ENCODE measurements at regions of chr18 and their contacts with region 1.

Region 1: DNA sequence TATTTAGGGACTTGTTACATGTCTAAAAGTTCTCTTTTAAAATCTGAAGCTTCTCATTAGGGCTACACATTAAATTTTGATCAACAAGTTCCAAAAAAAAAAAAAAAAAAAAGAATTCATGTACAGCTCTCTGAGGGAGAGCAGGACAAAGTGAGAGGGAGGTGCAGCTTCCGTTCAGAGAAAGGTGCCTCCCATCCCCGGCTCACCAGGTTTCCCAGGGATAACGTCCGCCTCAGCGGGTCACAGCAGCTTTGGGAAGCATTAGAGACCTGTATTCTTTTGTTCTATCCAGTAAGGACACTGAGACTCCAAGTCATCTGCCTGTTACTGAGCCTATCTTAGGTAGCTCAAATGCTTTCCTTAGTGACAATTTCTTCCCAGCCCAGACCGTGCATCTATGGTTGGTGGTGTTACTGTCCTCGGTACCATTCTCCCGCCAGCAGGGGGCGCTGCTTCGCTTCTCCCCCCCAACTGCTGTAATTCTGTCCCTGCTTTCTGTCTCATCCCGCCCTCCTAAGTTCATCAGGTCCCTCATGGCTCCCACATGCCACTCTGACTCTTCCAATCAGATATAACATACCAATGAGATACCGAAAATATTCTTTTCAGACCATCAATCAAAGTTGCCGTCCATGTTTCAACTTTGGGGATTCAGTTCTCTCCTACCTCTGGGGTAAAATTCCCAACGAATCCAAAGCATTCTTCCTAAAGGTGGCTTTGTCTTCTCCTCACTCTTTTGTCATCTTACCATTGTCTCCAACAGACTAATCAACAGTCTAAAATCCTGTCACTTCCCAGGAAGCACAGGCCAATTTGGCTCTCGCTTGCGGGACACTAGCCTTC is 466.5 kb downstream of the METTL4 start:
- DNase-seq: peak; percentile 28 to 42
- ATAC-seq: peak; percentile 76 to 90
- H3K4me3 ChIP-seq: no peak overlapping the region
- H3K27ac ChIP-seq: no peak overlapping the region
- H3K4me1 ChIP-seq: no peaks in the 10 kb centered on the region
- CTCF ChIP-seq: peak; percentile 54
- EP300 ChIP-seq: no peak
- POLR2A ChIP-seq: no peak
- RAD21 ChIP-seq: peak; percentile 58 to 67

Region 2: DNA sequence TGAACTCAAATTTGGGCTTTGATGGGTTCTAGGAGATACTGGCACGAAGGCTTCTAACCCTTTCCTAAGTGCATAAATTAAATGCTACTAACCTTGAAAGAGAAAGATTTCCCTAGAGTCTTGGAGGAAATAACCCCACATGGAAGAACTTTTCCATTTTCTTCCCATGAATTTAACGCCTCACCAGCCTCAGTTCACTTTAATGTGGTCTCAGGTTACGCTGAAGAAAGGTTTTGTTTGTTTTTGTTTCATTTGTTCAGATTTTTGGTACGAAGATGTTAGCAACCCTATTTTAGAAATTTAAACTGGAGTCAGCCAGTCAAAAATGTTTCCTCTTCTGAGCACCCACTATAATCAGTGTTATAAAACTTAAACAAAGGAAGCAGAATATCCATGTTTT is 435.7 kb after region 1 on chr18:
- CTCF ChIA-PET with region 1: interaction called, 18 read pairs
- POLR2A ChIA-PET with region 1: no interaction called
- DNase-seq: no peak
- ATAC-seq: no peak
- H3K4me3 ChIP-seq: no peak overlapping the region
- H3K27ac ChIP-seq: no peak overlapping the region
- H3K4me1 ChIP-seq: peaks cover 11% of the 10 kb centered on the region; the same call in 2 of the 3 replicates
- CTCF ChIP-seq: no peak
- EP300 ChIP-seq: no peak
- POLR2A ChIP-seq: no peak
- RAD21 ChIP-seq: no peak

Region 3: DNA sequence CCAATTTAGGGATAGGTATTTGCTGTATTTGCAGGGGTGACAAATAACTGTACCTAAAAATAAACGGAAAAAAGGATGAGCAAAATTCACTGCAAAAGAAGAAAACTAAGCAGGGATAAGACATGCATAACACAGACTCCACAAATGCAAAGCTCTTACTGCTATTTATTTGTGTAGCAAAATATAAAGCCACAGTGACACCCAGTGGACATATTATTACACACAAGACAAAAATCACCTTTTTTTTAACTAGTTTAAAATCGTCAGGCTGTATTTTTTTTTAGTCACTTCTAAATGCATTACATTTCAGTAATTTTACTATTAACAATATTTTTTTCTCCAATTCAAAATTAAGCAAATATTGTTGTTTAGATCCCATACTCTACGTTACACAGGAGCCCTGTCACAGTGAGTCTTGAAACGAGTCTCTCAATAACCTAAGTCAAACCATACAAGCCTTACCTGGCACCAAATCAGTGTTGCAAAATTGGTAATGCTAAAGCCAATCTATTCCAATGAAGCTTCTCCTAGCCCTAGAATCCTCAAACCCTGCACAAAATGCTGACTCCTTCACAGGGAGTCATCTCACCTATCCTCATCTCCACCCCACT is 442.7 kb after region 1 on chr18:
- CTCF ChIA-PET with region 1: interaction called, 18 read pairs
- POLR2A ChIA-PET with region 1: no interaction called
- DNase-seq: peak in 1 of 2 experiments; percentile 47
- ATAC-seq: no peak
- H3K4me3 ChIP-seq: no peak overlapping the region
- H3K27ac ChIP-seq: no peak overlapping the region
- H3K4me1 ChIP-seq: no peaks in the 10 kb centered on the region
- CTCF ChIP-seq: peak; percentile 60
- EP300 ChIP-seq: no peak
- POLR2A ChIP-seq: no peak
- RAD21 ChIP-seq: peak; percentile 60 to 67